Lower lobe of right lung (tissue), 2 donors: ENCODE measurements at regions of chrX and their contacts with region 1.

Region 1: DNA sequence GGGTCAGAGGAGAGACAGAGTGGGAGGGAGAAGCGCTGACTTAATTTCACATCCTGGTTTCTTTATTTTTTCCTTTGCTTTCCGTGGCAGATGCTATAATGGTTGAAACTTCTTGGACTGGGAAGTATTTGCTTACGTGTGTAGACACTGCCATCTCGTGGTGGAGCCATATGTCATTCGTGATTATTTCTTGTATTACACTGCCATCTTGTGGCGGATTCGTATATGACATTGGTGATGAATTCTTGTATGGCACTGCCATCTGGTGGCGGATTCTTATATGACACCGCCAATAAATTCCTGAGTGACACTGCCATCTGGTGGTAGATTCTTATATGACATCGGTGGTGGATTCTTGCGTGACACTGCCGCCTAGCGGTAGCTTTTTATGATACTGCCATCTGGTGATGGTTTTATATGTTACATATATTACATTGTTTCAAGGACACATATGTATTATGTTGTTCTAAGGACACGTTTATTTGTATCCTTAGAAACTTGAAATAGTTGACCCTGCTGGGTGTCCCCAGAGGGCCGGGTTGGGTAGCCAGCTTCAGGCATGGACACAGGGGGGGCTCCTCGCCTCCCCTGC is 37.3 kb upstream of the CLCN4 start:
- DNase-seq: no peak
- ATAC-seq: peak; percentile 82 to 97
- H3K4me3 ChIP-seq: no peak overlapping the region
- H3K27ac ChIP-seq: no peak overlapping the region
- H3K4me1 ChIP-seq: peaks cover 24% of the 10 kb centered on the region
- H3K27me3 ChIP-seq: no peaks in the 10 kb centered on the region
- CTCF ChIP-seq: peak; percentile 96

Region 2: GRCh38 chrX:10014462-10015356 is 104.8 kb before region 1 on chrX:
- intact Hi-C with region 1: loop called (anchors 10 kb)
- DNase-seq: peak; percentile 93
- ATAC-seq: peak; percentile 90 to 96
- H3K4me3 ChIP-seq: peak overlapping the region; percentile 62
- H3K27ac ChIP-seq: peak overlapping the region; percentile 91
- H3K4me1 ChIP-seq: peaks cover 37% of the 10 kb centered on the region
- H3K27me3 ChIP-seq: no peaks in the 10 kb centered on the region
- CTCF ChIP-seq: no peak

Region 3: DNA sequence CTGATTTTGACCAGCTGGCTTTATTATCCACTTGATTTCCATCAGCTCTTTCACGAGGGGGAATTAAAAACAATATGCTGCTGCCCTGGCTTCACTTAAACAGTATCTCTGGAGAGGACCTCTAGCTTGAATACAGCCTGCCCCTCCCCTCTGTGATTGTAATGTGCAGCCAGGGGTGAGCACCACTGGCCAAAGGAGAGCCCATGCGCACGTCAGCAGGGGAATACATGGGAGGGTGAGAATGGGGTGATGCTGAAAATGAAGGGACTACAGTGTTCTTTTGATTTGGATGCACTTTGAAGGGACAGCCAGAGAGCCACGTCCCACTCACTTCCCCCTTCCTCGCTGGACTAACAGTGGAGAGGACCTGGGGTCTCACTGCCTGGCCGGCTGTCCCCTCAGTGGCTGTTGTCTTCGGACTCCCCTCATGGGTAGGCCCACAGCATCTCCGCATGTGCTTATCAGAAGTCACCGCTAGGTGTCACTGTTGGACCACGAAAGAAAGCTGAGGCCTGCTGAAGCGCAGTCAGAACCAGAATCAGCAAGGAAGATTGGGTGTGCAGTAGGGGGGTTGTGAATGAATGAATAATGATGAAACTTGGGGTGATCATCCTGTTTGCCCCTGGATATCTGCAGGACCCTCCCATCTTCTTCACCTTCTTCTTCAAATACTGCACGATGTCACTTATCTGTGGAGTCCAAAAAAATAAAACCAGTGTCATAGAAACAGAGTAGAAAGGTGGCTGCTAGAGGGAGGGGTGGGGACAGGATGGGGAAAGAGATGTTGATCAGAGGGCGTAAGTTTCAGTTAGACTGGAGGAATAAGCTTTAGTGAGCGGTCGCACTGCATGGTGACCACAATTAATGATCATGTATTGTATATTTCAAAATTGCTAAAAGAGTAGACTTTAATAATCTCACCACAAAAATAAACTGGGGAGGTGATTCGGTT is 70.1 kb after region 1 on chrX:
- intact Hi-C with region 1: no loop called
- DNase-seq: peak; percentile 59
- ATAC-seq: peak; percentile 91 to 94
- H3K4me3 ChIP-seq: no peak overlapping the region
- H3K27ac ChIP-seq: no peak overlapping the region
- H3K4me1 ChIP-seq: no peaks in the 10 kb centered on the region
- H3K27me3 ChIP-seq: no peaks in the 10 kb centered on the region
- CTCF ChIP-seq: peak; percentile 70